ENCODE measurements at regions of chr18 and their contacts with region 1.

Region 1: DNA sequence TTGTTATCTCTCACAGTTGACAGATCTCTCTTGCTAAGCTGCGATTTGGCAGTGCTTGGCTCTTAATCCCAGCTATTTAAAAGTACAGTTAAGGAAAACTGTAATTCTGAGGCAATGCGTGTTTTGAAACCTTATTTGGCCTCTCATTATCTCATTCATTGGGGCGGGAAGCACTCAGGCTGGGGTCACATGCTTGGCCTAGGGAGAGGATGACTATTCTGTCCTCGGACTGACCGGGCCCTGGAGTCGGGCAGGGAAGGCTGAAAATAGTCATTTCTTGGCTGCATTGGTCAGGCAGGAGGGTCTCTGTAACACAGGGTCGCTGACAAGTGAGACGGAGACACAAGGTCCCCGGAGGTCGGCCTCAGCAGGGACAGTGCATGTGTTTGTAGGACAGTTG is 20.2 kb upstream of the EMILIN2 start:
- DNase-seq: no peak
- H3K4me3 ChIP-seq: no peak overlapping the region
- H3K27ac ChIP-seq: no peak overlapping the region
- H3K4me1 ChIP-seq: no peaks in the 10 kb centered on the region
- H3K27me3 ChIP-seq: no peaks in the 10 kb centered on the region
- CTCF ChIP-seq: no peak
- POLR2A ChIP-seq: no peak

Region 2: DNA sequence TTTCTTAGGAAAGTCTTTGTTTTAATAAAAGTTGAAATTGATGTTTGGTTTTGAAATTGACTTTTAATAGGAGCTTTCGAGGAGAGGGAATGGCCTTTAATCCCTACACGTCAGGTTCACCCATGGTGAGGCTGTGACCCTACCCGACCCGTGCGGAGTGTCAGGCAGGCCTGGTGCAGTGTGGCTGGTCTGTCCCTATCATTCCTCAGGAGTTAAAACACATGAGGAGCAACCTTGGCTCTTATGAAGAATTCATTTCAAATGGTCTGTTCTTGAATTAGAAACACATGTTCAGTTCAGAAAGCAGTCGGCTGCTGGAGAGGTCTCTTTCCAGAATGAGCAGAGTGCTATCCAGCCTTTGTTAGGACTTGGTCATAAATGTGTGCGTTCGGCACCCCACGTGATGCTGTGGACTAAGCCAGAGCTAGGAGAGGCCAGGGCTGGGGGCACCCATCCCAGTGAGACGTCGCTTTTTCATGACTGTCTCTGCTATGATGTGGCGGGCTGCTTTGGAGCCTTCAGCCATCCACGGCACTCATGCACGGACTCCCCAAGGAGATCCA is 74.9 kb after region 1 on chr18:
- intact Hi-C with region 1: loop called (anchors 2 kb)
- DNase-seq: no peak
- H3K4me3 ChIP-seq: no peak overlapping the region
- H3K27ac ChIP-seq: no peak overlapping the region
- H3K4me1 ChIP-seq: no peaks in the 10 kb centered on the region
- H3K27me3 ChIP-seq: no peaks in the 10 kb centered on the region
- CTCF ChIP-seq: no peak
- POLR2A ChIP-seq: no peak